GM10248 (cell line): ENCODE measurements at regions of chr16 and their contacts with region 1.

Region 1: DNA sequence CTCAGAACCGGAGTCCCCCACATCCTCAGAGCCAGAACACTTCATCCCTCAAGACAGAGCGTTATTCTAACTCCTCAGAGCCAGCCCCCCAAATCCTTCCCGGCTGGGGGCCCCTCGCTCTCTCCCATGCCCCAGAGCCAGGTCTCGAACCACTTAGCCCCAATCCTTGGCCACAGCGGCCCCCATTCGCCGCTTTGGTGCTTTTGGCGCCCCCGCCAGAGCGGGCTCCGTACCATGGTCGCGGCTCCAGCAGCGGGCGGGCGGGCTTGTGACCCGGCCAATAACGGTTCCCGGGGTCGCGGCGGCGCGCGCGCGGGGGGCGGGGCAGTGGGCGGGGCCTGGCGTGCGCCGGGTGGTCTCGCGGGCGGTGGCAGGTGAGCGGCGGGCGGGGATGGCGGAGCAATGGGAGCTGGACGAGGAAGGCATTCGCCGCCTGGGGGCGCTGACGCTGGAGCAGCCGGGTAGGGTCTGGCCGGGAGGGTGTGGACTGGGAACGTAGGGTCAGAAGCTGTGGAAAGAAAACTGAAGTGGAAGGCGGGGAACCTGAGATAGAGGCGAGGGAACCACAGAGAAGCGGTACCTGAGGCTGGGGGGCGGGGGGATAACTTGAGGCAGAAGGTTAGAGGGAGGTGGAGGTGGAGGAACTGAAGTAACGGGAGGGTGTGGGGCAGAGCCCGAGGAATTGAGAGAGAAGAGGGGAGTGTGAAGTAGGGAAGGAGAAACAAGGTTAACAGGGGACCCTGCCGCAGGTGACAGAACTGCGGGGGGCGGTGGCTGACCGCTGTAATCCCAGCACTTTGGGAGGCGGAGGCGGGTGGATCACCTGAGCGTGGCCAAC is at the starts of genes KCTD19 and LRRC36:
- DNase-seq: peak; percentile 80
- CTCF ChIP-seq: peak; percentile 52

Region 2: GRCh38 chr16:67294938-67295361 is 31.7 kb before region 1 on chr16:
- CTCF ChIA-PET with region 1: interaction called, 13 read pairs
- POLR2A ChIA-PET with region 1: no interaction called
- DNase-seq: no peak
- CTCF ChIP-seq: no peak

Region 3: DNA sequence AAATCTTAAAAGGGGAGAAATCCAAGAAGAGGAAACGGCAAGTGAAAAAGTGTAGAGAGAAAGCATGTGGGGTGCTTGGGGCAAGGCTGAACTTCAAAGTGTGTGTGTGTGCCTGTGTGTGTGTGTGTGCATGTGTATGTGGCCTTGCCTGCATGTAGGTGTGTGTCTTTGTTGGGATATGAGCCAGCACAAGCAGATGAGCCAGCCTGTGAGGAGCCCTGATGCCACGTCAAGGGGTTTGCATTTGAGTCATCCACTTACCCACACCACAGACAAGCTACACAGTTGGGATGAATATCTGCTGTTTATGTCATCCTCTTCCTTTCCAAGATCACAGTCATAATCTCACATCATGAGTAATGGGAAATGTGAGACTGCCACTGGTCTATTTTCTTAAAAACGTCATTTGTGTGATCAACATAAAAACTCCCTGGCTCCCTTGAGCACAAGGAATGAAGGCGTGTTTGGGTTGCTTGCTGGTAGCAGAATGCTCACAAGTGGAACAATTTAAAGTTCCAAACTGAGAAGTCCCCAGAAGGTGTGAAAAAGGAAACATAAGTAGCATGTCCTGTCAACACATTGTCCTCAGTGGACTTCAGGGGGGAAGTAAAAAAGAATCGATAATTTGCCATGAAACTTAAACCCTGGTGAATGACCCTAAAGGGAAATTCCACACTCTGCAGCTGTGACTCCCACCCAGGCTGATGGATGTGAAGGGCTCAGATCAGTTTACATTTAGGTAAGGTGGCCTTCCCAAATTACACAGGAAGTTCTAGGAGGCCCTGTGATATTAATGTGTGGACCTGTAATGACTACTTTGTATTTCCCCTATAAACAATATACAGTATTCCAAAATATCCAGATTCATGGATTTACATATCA is 14.8 kb before region 1 on chr16:
- CTCF ChIA-PET with region 1: interaction called, 11 read pairs
- POLR2A ChIA-PET with region 1: no interaction called
- DNase-seq: peak; percentile 76
- CTCF ChIP-seq: no peak

Region 4: DNA sequence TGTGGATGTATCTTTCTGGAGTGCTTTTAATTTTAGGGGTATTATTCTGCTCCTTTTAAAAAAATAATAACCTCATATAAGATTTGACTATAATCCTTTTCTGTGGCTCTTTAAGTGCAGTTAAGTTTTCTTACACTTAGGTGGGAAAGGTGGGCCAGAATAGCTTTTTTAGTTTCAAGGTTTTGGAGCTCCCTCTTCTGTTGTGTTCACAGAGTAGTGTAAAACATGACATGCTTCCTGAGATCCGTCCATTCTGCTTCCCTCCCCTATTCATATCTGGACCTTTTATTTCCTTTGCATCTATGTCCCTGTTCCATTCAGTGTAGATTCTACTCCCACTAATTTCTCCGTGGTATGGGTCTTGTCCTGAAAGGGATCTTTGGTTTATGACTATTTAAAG is 12.8 kb after region 1 on chr16:
- CTCF ChIA-PET with region 1: interaction called, 23 read pairs
- POLR2A ChIA-PET with region 1: no interaction called
- DNase-seq: no peak
- CTCF ChIP-seq: peak; percentile 42